ENCODE measurements at regions of chr12 and their contacts with region 1.

Region 1: GRCh38 chr12:116291218-116291617 is 13.7 kb upstream of the MED13L start:
- DNase-seq: no peak
- ATAC-seq: no peak
- H3K4me3 ChIP-seq: no peak overlapping the region
- H3K27ac ChIP-seq: no peak overlapping the region
- H3K4me1 ChIP-seq: peaks cover 17% of the 10 kb centered on the region
- CTCF ChIP-seq: no peak
- EP300 ChIP-seq: no peak
- POLR2A ChIP-seq: no peak
- RAD21 ChIP-seq: no peak

Region 2: DNA sequence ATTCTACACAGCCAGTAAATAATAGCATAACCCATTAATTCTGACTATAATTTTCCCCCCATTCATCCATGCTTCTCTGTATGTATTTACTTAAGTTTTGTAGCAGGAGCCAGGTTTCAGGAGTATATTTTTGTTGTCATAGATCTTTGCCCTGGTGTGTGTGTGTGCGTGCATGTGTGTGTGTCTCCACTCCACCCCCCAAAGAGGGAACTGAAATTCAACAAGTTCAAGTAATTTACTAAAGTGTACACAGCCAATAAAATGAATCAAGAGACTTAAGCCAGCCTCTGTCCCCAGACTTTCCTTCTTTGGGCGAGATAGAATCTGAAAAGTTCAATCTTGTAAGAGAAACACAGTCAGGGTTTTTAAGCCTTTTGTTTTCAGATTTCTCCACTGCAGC is 805.7 kb before region 1 on chr12:
- CTCF ChIA-PET with region 1: no interaction called
- POLR2A ChIA-PET with region 1: no interaction called
- DNase-seq: no peak
- ATAC-seq: no peak
- H3K4me3 ChIP-seq: no peak overlapping the region
- H3K27ac ChIP-seq: no peak overlapping the region
- H3K4me1 ChIP-seq: no peaks in the 10 kb centered on the region
- CTCF ChIP-seq: no peak
- EP300 ChIP-seq: no peak
- POLR2A ChIP-seq: no peak
- RAD21 ChIP-seq: no peak

Region 3: GRCh38 chr12:116277393-116278278 is 13.6 kb before region 1 on chr12 and contains the start of gene MED13L:
- CTCF ChIA-PET with region 1: interaction called, 10 read pairs
- POLR2A ChIA-PET with region 1: no interaction called
- DNase-seq: peak; percentile 91 to 93
- ATAC-seq: peak; percentile 78 to 89
- H3K4me3 ChIP-seq: peak within 1 kb of the TSS; percentile 71
- H3K27ac ChIP-seq: peak within 1 kb of the TSS; percentile 96 to 99
- H3K4me1 ChIP-seq: peaks cover 41% of the 10 kb centered on the region
- CTCF ChIP-seq: peak; percentile 64
- EP300 ChIP-seq: no peak
- POLR2A ChIP-seq: peak; percentile 56
- RAD21 ChIP-seq: peak; percentile 59 to 94
- polyA plus RNA-seq, gene MED13L: 126 and 134 TPM in 2 replicates

Region 4: GRCh38 chr12:116466536-116466935 is 175.3 kb after region 1 on chr12:
- CTCF ChIA-PET with region 1: no interaction called
- POLR2A ChIA-PET with region 1: no interaction called
- DNase-seq: no peak
- ATAC-seq: peak in 1 of 2 experiments; percentile 51; a peak in 3 of 6 replicates
- H3K4me3 ChIP-seq: no peak overlapping the region
- H3K27ac ChIP-seq: peak overlapping the region in 1 of 2 experiments; percentile 2; a peak in 1 of 6 replicates
- H3K4me1 ChIP-seq: no peaks in the 10 kb centered on the region
- CTCF ChIP-seq: no peak
- EP300 ChIP-seq: no peak
- POLR2A ChIP-seq: no peak
- RAD21 ChIP-seq: no peak

Measured in A549 (cell line).